Tibial artery (tissue), 4 donors: ENCODE measurements at regions of chr2 and their contacts with region 1.

Region 1: GRCh38 chr2:111897924-111898702 is at the start of gene MERTK:
- DNase-seq: peak; percentile 84 to 94
- H3K4me3 ChIP-seq: peak within 1 kb of the TSS; percentile 89 to 92
- H3K27ac ChIP-seq: peak within 1 kb of the TSS; percentile 92 to 95
- H3K4me1 ChIP-seq: peaks cover 0 to 43% (median 14%) of the 10 kb centered on the region in 4 donors
- H3K27me3 ChIP-seq: no peaks in the 10 kb centered on the region
- CTCF ChIP-seq: peak; percentile 65 to 77

Region 2: GRCh38 chr2:111946294-111947114 is 48.4 kb after region 1 on chr2:
- intact Hi-C with region 1: loop called (anchors 2 kb)
- DNase-seq: peak; percentile 61 to 75
- H3K4me3 ChIP-seq: no peak overlapping the region
- H3K27ac ChIP-seq: peak overlapping the region; percentile 82 to 84
- H3K4me1 ChIP-seq: peaks cover 0 to 45% (median 24%) of the 10 kb centered on the region in 4 donors
- H3K27me3 ChIP-seq: no peaks in the 10 kb centered on the region
- CTCF ChIP-seq: no peak

Region 3: DNA sequence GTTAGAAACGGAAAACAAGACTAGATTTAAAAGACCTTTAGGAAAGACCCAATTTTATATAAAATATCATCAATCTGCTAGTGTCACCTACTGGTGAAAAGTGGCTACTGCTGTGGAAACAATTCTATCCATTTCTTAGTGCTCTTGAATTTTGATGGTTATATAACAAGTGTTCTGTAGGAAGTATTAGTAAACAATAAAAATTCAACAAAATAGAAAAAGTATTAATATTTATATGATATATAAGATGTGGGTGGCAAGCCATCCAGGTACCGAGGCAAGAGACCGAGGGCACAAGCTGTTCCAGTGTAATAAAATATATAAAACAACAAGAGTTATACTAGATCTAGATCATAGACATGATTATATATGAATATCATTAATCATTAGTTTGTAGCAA is 150.8 kb after region 1 on chr2:
- intact Hi-C with region 1: loop called (anchors 5 kb)
- DNase-seq: no peak
- H3K4me3 ChIP-seq: no peak overlapping the region
- H3K27ac ChIP-seq: peak overlapping the region in 1 of 2 donors; percentile 30
- H3K4me1 ChIP-seq: peaks cover 0 to 11% (median 3%) of the 10 kb centered on the region in 4 donors
- H3K27me3 ChIP-seq: no peaks in the 10 kb centered on the region
- CTCF ChIP-seq: peak; percentile 54 to 89

Region 4: GRCh38 chr2:112275306-112275886 is 377.3 kb after region 1 on chr2 and contains the start of gene ZC3H6:
- intact Hi-C with region 1: loop called (anchors 10 kb)
- DNase-seq: peak; percentile 97 to 99
- H3K4me3 ChIP-seq: peak within 1 kb of the TSS; percentile 94 to 100
- H3K27ac ChIP-seq: peak within 1 kb of the TSS; percentile 100
- H3K4me1 ChIP-seq: peaks cover 0 to 23% (median 6%) of the 10 kb centered on the region in 4 donors
- H3K27me3 ChIP-seq: no peaks in the 10 kb centered on the region
- CTCF ChIP-seq: peak; percentile 16 to 47

Region 5: DNA sequence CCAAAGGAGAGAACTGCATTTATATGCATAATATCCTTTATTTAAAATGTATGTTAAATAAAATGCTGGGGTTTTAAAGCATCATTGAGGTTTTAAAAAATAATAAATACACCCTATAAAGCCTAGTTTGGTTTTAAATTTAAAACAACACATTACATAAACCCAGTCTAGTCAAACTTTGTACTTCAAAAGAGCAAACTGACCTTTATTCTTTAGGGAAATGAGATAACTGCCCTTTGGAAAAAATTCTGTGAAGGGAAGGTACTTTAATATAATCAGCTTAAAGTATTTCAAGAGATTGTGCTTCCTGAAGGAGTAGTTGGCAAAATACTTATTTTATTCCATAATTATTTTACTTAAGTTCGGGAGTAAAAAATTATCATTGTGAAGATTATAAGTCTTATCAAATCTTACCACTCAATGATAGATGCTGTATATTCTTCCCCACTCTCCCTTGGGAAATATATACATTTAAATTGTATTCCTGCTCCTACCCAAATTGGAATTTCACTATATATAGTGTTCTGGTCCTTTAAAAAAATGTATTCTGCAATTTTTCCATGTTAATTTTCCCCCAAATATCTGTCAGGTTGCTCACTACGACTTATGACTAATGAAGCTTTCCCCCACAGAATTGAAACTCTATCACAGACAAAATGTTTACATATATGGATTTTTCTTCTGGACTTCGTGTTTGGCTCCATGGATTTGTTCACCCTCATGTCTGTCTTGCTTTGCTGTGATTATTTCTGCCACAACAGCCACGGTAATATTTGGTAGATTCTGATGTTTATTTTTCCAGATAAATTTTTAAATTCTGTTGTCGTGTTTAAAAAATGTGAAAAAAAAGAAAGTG is 419.4 kb after region 1 on chr2:
- intact Hi-C with region 1: no loop called
- DNase-seq: no peak
- H3K4me3 ChIP-seq: no peak overlapping the region
- H3K27ac ChIP-seq: peak overlapping the region; percentile 1 to 42
- H3K4me1 ChIP-seq: peaks cover 0 to 16% (median 0%) of the 10 kb centered on the region in 4 donors
- H3K27me3 ChIP-seq: no peaks in the 10 kb centered on the region
- CTCF ChIP-seq: no peak